Mammary epithelial cell (primary cell): ENCODE measurements at regions of chr3 and their contacts with region 1.

Region 1: DNA sequence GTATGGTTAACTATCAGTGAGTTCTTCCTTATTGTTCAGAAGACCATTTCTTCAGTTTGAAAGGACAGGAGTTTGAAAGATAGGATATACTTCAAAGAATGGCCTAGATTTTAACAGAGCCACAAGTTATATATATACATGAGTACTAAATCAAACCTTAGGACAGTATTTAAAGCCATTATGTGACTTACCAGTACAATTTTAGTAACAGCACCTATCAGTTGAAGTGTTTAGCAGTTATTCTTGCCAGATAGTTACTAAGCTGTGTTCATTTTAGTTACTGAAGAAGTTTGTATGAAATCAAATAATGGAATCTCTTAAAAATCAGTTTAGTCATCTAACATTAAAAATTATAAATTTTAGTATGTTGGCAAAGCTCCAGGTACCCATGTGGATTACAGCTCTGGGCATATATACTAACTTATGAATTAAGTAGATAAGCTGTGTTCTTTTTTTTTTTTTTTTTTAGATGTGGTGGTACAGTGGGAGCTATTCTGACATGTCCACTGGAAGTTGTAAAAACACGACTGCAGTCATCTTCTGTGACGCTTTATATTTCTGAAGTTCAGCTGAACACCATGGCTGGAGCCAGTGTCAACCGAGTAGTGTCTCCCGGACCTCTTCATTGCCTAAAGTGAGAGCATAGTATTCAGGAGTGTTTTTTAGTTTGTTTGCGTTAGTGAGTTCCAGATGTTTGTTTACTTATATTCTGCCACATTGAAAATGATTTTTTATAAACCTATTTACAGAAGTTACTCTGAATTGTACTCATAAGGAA is 14.6 kb downstream of the SLC25A36 start:
- DNase-seq: no peak
- H3K4me3 ChIP-seq: no peak overlapping the region
- H3K27ac ChIP-seq: no peak overlapping the region
- H3K4me1 ChIP-seq: no peaks in the 10 kb centered on the region
- H3K27me3 ChIP-seq: no peaks in the 10 kb centered on the region
- CTCF ChIP-seq: no peak

Region 2: DNA sequence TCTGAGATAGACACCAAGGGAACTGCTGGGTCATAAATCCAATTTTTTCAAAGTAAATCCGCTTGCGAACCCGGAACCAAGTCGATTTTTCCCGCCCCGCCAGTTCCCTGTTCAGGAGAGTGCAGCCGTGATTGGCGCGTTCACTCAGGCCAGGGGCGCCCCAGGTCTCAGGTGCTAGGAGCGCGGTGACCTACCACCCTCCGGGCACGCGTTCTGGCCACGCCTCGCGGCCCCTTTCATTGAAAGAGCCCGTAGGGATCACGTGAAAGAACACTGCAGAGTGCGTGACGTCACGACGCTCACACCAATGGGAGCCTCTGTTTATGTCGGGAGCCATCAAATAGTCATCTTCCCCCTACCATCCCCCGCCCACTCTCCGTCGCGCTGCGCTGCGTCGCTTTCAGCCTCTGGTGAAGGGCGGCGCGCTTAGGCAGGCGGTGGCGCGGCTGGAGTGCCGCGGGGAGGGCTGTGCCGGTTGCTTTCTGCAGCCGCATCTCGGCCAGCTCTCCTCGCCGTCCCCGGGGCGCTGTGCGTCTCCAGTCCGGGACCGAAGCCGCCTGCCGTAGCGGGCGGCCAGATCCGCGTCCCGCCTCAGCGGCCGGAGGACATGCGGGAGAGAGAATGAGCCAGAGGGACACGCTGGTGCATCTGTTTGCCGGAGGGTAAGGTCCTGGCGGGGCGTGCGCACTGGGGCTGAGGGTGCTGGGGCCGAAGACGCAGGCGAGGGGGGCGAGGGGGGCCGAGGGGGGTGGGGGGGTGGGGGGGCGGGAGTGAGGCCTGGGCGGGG is 14.6 kb before region 1 on chr3 and contains the start of gene SLC25A36:
- CTCF ChIA-PET with region 1: no interaction called
- dilution Hi-C with region 1: no loop called
- in situ Hi-C with region 1: no loop called
- intact Hi-C with region 1: loop called (anchors 2 kb)
- DNase-seq: peak; percentile 97
- H3K4me3 ChIP-seq: peak within 1 kb of the TSS; percentile 68 to 93 (median 84)
- H3K27ac ChIP-seq: peak within 1 kb of the TSS; percentile 80
- H3K4me1 ChIP-seq: peaks cover 6% of the 10 kb centered on the region
- H3K27me3 ChIP-seq: no peaks in the 10 kb centered on the region
- CTCF ChIP-seq: no peak
- total RNA-seq, gene SLC25A36: 59.9 to 89.0 TPM